Mammary epithelial cell (primary cell): ENCODE measurements at regions of chr21 and their contacts with region 1.

Region 1: GRCh38 chr21:31604591-31605190 is 54.8 kb upstream of the SOD1 start:
- DNase-seq: peak; percentile 41
- H3K4me3 ChIP-seq: no peak overlapping the region
- H3K27ac ChIP-seq: no peak overlapping the region
- H3K4me1 ChIP-seq: peaks cover 7% of the 10 kb centered on the region
- H3K27me3 ChIP-seq: no peaks in the 10 kb centered on the region
- CTCF ChIP-seq: peak; percentile 78 to 91

Region 2: DNA sequence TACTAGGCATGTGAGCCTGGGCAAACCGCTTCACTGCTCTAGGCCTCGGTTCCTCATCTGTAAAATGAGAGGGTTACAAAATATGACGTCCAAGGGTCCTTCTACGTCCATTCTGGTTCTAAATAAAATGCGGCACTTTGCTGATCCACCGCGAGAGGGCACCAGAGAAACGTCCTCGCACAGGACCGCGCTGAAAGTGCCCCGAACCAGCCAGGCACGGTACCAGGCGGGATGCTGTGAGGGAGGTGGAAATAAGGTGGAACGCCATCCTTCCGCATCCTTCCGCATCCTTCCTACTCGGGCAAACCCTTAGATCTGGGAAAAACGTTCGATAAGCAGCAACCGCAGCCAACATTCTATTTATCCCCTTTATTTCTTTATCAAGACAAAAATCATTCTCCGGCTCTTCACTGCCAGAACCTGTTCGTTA is 506.1 kb before region 1 on chr21:
- CTCF ChIA-PET with region 1: no interaction called
- dilution Hi-C with region 1: loop called (anchors 25 kb)
- in situ Hi-C with region 1: loop called in 1 of 2 experiments (anchors 5 kb)
- intact Hi-C with region 1: loop called (anchors 1 kb)
- DNase-seq: peak; percentile 24
- H3K4me3 ChIP-seq: no peak overlapping the region
- H3K27ac ChIP-seq: no peak overlapping the region
- H3K4me1 ChIP-seq: no peaks in the 10 kb centered on the region
- H3K27me3 ChIP-seq: no peaks in the 10 kb centered on the region
- CTCF ChIP-seq: peak; percentile 89 to 91

Region 3: GRCh38 chr21:31117128-31117916 is 487.4 kb before region 1 on chr21:
- CTCF ChIA-PET with region 1: no interaction called
- dilution Hi-C with region 1: no loop called
- in situ Hi-C with region 1: loop called in 1 of 2 experiments (anchors 10 kb)
- intact Hi-C with region 1: no loop called
- DNase-seq: peak; percentile 73
- H3K4me3 ChIP-seq: no peak overlapping the region
- H3K27ac ChIP-seq: no peak overlapping the region
- H3K4me1 ChIP-seq: peaks cover 12% of the 10 kb centered on the region
- H3K27me3 ChIP-seq: no peaks in the 10 kb centered on the region
- CTCF ChIP-seq: peak in 1 of 2 donors; percentile 15

Region 4: GRCh38 chr21:31686272-31686915 is 81.7 kb after region 1 on chr21:
- CTCF ChIA-PET with region 1: no interaction called
- dilution Hi-C with region 1: no loop called
- in situ Hi-C with region 1: no loop called
- intact Hi-C with region 1: no loop called
- DNase-seq: no peak
- H3K4me3 ChIP-seq: no peak overlapping the region
- H3K27ac ChIP-seq: no peak overlapping the region
- H3K4me1 ChIP-seq: no peaks in the 10 kb centered on the region
- H3K27me3 ChIP-seq: no peaks in the 10 kb centered on the region
- CTCF ChIP-seq: no peak